ENCODE measurements at regions of chr14 and their contacts with region 1.

Region 1: GRCh38 chr14:86897704-86898513 is 1095.1 kb downstream of the GALC start:
- DNase-seq: no peak
- H3K4me3 ChIP-seq: no peak overlapping the region
- H3K27ac ChIP-seq: no peak overlapping the region
- H3K4me1 ChIP-seq: no peaks in the 10 kb centered on the region
- H3K27me3 ChIP-seq: no peaks in the 10 kb centered on the region
- CTCF ChIP-seq: no peak

Region 2: GRCh38 chr14:86521843-86522242 is 376.1 kb before region 1 on chr14:
- intact Hi-C with region 1: no loop called
- DNase-seq: no peak
- H3K4me3 ChIP-seq: no peak overlapping the region
- H3K27ac ChIP-seq: no peak overlapping the region
- H3K4me1 ChIP-seq: no peaks in the 10 kb centered on the region
- H3K27me3 ChIP-seq: no peaks in the 10 kb centered on the region
- CTCF ChIP-seq: no peak

Region 3: GRCh38 chr14:86802726-86803125 is 95.2 kb before region 1 on chr14:
- intact Hi-C with region 1: no loop called
- DNase-seq: no peak
- H3K4me3 ChIP-seq: no peak overlapping the region
- H3K27ac ChIP-seq: no peak overlapping the region
- H3K4me1 ChIP-seq: no peaks in the 10 kb centered on the region
- H3K27me3 ChIP-seq: no peaks in the 10 kb centered on the region
- CTCF ChIP-seq: no peak

Region 4: DNA sequence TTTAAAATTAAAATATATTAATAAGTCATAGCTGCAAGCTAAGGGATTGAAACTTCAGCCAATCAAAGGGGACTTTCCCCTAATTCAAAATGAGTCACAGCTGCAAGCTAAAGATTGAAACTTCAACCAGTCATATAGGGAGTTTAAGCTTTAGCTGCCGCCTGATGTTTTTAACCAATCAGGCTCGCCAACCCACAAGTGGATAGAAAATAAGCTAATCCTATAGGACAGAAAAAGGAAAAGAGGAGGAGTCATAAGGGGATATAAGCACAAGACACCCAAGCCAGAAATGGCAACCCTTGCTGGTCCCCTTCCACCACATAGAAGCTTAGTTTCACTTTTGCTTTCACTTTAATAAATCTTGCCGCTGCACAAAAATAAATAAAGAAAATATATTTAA is 59.5 kb before region 1 on chr14:
- intact Hi-C with region 1: loop called (anchors 2 kb)
- DNase-seq: no peak
- H3K4me3 ChIP-seq: no peak overlapping the region
- H3K27ac ChIP-seq: no peak overlapping the region
- H3K4me1 ChIP-seq: no peaks in the 10 kb centered on the region
- H3K27me3 ChIP-seq: no peaks in the 10 kb centered on the region
- CTCF ChIP-seq: no peak